ENCODE measurements at regions of chr5 and their contacts with region 1.

Region 1: GRCh38 chr5:83488271-83488670 is 16.7 kb downstream of the VCAN start:
- DNase-seq: no peak
- H3K4me3 ChIP-seq: no peak overlapping the region
- H3K4me3 Mint-ChIP-seq: no peak overlapping the region
- H3K27ac ChIP-seq: no peak overlapping the region
- H3K27ac Mint-ChIP-seq: no peak overlapping the region
- H3K4me1 ChIP-seq: peaks cover 7 to 33% of the 10 kb centered on the region in 2 donors
- H3K4me1 Mint-ChIP-seq: peaks cover 42% of the 10 kb centered on the region
- H3K27me3 ChIP-seq: no peaks in the 10 kb centered on the region
- H3K27me3 Mint-ChIP-seq: peaks cover 0 to 2% (median 0%) of the 10 kb centered on the region in 3 donors
- CTCF ChIP-seq: no peak

Region 2: DNA sequence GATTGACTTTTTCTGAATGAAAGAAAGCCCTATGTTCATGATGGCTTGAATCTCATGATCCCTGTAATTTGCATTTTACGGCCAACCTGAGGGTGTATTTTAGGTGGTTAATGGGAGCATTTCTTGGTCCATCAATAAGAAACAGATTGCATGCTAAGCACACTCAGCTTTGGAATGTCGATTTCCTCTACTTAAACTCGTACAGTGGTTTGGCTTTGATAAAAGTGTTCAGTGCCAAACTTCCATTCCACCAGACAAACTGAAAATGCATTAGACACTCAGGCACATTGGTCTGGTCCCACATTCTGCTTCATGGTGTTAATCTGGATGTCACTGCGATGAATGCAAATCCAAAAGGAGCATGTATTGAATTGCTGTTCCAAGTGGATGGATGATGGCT is 60.3 kb after region 1 on chr5:
- intact Hi-C with region 1: loop called in 1 of 2 experiments (anchors 5 kb)
- DNase-seq: no peak
- H3K4me3 ChIP-seq: no peak overlapping the region
- H3K4me3 Mint-ChIP-seq: no peak overlapping the region
- H3K27ac ChIP-seq: no peak overlapping the region
- H3K27ac Mint-ChIP-seq: peak overlapping the region in 2 of 7 donors; percentile 58 to 73
- H3K4me1 ChIP-seq: no peaks in the 10 kb centered on the region
- H3K4me1 Mint-ChIP-seq: peaks cover 2% of the 10 kb centered on the region
- H3K27me3 ChIP-seq: no peaks in the 10 kb centered on the region
- H3K27me3 Mint-ChIP-seq: peaks cover 0 to 3% (median 0%) of the 10 kb centered on the region in 3 donors
- CTCF ChIP-seq: no peak

Measured in CD14-positive monocyte (primary cell).